SK-N-SH (cell line): ENCODE measurements at regions of chr1 and their contacts with region 1.

Region 1: DNA sequence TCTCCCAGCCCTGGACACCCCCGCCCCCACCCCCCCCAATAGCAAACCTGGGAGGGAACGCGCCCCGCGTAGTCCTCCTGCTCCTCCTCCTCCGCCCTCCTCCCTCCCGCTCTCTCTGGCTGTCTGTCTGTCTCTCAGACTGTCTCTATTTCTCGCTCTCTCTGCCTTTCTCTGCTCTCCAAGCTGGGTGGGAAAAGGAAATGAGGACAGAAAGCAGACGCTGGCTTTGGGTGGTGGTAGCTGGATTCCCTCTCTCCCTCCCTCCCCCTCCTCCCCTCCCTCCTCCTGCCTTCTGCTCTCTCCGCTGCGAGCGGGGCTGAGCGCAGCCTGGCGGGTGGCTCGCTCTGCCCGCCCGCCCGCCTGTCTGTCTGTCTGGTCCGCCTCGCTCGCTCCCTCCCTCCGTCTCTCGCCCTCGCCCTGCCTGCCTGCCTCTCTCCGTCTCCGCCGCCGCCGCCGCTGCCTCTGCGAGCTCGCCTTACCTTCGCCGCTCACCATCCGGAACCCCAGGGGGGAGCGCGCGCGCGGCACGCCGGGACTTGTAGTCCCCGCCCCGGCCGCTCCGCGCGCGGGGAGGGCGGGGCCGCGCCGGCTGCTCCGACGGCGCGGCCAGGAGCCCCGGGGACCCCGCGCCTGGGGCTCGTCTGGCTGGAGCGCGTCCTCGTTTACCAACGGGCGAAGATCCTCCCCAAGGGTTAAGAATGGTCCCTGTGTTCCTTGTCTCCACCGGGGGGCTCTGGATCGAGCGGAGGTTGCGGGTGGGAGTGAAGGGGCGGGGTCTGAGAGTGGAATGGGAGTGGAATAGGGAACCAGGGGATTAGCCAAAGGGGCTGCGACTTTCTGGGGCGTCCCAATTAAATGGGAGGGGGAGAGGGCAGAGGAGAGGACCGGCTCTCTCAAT is at the start of gene AHDC1:
- DNase-seq: peak; percentile 95
- H3K4me3 ChIP-seq: peak within 1 kb of the TSS; percentile 92
- H3K27ac ChIP-seq: peak within 1 kb of the TSS; percentile 60 to 72; a peak in 3 of 4 replicates
- H3K4me1 ChIP-seq: peaks cover 33 to 39% of the 10 kb centered on the region in 2 experiments
- H3K27me3 ChIP-seq: no peaks in the 10 kb centered on the region
- CTCF ChIP-seq: no peak
- EP300 ChIP-seq: no peak
- RAD21 ChIP-seq: no peak; the same call in 1 of the 2 replicates
- polyA plus RNA-seq, gene AHDC1: 3.1 and 8.5 TPM in 2 replicates

Region 2: DNA sequence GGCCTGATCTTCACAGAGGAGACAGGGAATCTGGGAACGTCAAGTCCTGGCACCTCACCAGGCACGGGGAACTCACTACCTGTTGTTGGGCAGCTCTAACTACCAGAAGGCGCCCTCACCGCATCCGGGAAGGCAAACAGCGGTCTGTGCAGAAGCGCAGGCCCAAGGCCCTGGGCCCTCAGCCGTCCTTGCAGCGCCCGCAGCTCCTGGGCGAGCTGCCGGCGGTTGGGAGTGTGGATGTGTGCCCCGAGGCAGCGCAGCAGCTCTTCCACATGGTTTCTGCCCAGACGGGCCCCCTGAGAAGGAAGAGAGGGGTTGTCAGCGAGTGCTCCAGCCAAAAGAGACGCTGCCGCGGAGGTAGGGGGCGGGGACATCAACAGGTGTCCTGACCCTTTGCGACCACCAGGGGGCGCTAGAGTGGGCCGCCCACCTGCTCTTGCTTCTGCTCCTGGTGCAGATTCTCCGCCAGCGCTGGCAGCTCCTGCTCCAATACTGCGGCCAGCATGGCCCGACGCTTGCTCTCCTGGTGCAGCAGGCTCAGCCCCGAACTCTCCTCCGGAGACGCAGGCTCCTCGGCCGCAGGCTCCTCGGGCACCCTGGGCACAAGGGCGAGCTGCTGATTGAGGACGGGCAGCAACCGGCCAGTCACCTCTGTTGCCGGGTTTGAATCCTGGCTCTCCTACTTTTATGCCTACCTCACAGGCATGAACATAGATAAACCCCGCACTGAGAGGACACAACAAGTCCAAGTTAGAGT is 246.5 kb before region 1 on chr1:
- CTCF ChIA-PET with region 1: interaction called, 10 read pairs
- POLR2A ChIA-PET with region 1: no interaction called
- DNase-seq: peak; percentile 97
- H3K4me3 ChIP-seq: peak overlapping the region in 1 of 2 experiments; percentile 48; a peak in 1 of 4 replicates
- H3K27ac ChIP-seq: no peak overlapping the region
- H3K4me1 ChIP-seq: peaks cover 0 to 5% of the 10 kb centered on the region in 2 experiments; a peak in 1 of 4 replicates
- H3K27me3 ChIP-seq: no peaks in the 10 kb centered on the region
- CTCF ChIP-seq: peak; percentile 89
- EP300 ChIP-seq: no peak
- RAD21 ChIP-seq: peak; percentile 65

Region 3: DNA sequence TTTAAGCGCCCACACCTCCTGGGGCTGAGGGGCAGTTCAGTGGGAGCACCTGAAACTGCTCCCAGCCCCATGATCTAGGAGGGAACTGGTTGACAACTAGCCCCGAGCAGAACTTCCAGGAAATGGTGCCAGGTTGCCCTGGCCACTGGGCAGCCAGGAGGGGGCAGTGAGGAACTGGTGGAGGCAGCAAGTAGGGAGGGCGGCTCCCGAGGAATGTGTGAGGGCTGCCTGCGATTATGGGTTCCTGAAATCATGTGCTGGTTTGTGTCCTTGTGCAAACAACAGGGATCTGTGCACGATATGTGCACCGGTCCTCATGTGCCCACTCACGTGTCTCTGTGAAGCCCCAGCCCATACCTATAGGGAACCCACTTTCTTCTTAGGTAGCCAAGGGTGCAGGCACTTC is 201.6 kb before region 1 on chr1:
- CTCF ChIA-PET with region 1: interaction called, 112 read pairs
- POLR2A ChIA-PET with region 1: no interaction called
- DNase-seq: peak; percentile 54
- H3K4me3 ChIP-seq: no peak overlapping the region
- H3K27ac ChIP-seq: no peak overlapping the region
- H3K4me1 ChIP-seq: peaks cover 0 to 4% of the 10 kb centered on the region in 2 experiments; a peak in 1 of 4 replicates
- H3K27me3 ChIP-seq: no peaks in the 10 kb centered on the region
- CTCF ChIP-seq: peak; percentile 47
- EP300 ChIP-seq: no peak
- RAD21 ChIP-seq: peak; percentile 40

Region 4: GRCh38 chr1:27519331-27520258 is 84.3 kb before region 1 on chr1:
- CTCF ChIA-PET with region 1: interaction called, 10 read pairs
- POLR2A ChIA-PET with region 1: no interaction called
- DNase-seq: peak; percentile 87
- H3K4me3 ChIP-seq: no peak overlapping the region; a peak in 1 of 4 replicates
- H3K27ac ChIP-seq: peak overlapping the region in 1 of 2 experiments; percentile 92; a peak in 2 of 4 replicates
- H3K4me1 ChIP-seq: peaks cover 0 to 65% of the 10 kb centered on the region in 2 experiments; a peak in 1 of 4 replicates
- H3K27me3 ChIP-seq: no peaks in the 10 kb centered on the region
- CTCF ChIP-seq: no peak
- EP300 ChIP-seq: no peak
- RAD21 ChIP-seq: peak; percentile 32; the same call in 1 of the 2 replicates

Region 5: DNA sequence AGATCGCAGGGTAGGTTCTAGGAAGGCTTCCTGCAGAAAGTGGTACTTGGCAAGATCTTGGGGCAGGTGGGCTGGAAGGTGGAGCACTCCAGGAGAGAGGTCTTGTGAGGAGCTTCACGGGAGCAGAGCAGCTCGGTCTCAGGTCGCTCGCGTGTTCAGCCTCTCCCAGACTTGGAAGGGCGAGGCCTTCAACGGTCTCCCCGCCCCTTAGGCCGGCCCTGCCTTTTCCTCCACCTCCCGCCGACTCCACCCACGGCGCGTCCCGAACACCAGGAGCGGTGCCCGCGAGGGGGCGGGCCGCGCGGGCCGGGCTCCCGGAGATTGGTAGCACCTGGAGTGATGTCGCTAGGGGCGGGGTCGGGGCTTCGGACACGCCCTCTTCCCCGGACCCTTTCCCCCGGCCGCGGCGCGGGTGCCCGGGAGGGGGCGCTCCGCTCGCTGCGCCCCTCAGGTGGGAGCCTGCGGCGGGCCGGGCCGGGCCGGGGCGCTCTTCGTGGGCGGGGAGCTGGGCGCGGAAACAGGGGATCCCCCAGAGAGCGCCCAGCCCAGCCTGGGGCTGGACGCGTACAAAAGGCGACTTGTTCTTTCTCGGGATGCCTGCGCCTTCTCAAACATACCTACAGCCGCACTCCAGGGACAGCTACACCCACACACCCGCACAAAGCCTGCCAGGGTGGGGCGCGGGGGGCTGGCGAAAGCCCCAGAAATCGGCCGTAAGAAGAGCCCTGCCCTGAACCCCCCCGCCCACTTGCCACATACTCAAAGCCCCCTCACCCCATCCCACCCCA is 35.4 kb before region 1 on chr1:
- CTCF ChIA-PET with region 1: interaction called, 603 read pairs
- POLR2A ChIA-PET with region 1: interaction called, 4 read pairs
- DNase-seq: peak; percentile 99
- H3K4me3 ChIP-seq: peak overlapping the region in 1 of 2 experiments; percentile 28; a peak in 2 of 4 replicates
- H3K27ac ChIP-seq: no peak overlapping the region
- H3K4me1 ChIP-seq: peaks cover 52 to 77% of the 10 kb centered on the region in 2 experiments; a peak in 3 of 4 replicates
- H3K27me3 ChIP-seq: no peaks in the 10 kb centered on the region
- CTCF ChIP-seq: peak; percentile 70
- EP300 ChIP-seq: no peak
- RAD21 ChIP-seq: peak; percentile 16; the same call in 1 of the 2 replicates

Region 6: GRCh38 chr1:27638047-27638734 is 34.3 kb after region 1 on chr1:
- CTCF ChIA-PET with region 1: interaction called, 25 read pairs
- POLR2A ChIA-PET with region 1: no interaction called
- DNase-seq: no peak
- H3K4me3 ChIP-seq: no peak overlapping the region
- H3K27ac ChIP-seq: no peak overlapping the region
- H3K4me1 ChIP-seq: no peaks in the 10 kb centered on the region; a peak in 1 of 4 replicates
- H3K27me3 ChIP-seq: no peaks in the 10 kb centered on the region
- CTCF ChIP-seq: no peak
- EP300 ChIP-seq: no peak
- RAD21 ChIP-seq: no peak

Region 7: DNA sequence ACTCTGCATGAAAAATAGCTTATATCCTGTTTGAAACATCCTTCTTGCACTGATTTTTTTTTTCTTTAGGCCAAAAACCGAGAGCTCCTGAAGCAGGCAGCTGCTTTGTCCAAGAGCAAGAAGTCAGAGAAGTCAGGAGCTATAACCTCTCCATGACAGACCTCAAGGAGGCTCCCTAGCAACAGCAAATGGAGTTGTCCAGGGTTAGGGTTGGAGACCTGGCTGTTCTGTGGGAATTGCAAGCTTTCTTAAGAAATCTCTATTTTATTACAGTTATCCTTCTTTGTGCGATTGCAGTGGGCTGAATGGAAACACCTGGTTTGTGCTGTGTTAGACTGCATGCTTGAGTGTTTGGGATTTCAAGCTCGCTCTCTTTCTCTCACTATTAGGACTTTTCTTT is 156.5 kb after region 1 on chr1:
- CTCF ChIA-PET with region 1: no interaction called
- POLR2A ChIA-PET with region 1: no interaction called
- DNase-seq: no peak
- H3K4me3 ChIP-seq: no peak overlapping the region
- H3K27ac ChIP-seq: peak overlapping the region in 1 of 2 experiments; percentile 78; a peak in 2 of 4 replicates
- H3K4me1 ChIP-seq: peaks cover 0 to 16% of the 10 kb centered on the region in 2 experiments; a peak in 2 of 4 replicates
- H3K27me3 ChIP-seq: no peaks in the 10 kb centered on the region
- CTCF ChIP-seq: no peak
- EP300 ChIP-seq: no peak
- RAD21 ChIP-seq: peak; percentile 68